IMR-90 (cell line): ENCODE measurements at regions of chrX and their contacts with region 1.

Region 1: GRCh38 chrX:16826207-16826606 is 39.9 kb downstream of the TXLNG start:
- DNase-seq: peak; percentile 74
- ATAC-seq: peak; percentile 69; the same call in 1 of the 2 replicates
- H3K4me3 ChIP-seq: no peak overlapping the region
- H3K27ac ChIP-seq: no peak overlapping the region
- H3K4me1 ChIP-seq: peaks cover 11% of the 10 kb centered on the region
- H3K27me3 ChIP-seq: no peaks in the 10 kb centered on the region; the same call in 1 of the 2 replicates
- CTCF ChIP-seq: peak; percentile 76
- POLR2A ChIP-seq: no peak
- RAD21 ChIP-seq: peak; percentile 80

Region 2: DNA sequence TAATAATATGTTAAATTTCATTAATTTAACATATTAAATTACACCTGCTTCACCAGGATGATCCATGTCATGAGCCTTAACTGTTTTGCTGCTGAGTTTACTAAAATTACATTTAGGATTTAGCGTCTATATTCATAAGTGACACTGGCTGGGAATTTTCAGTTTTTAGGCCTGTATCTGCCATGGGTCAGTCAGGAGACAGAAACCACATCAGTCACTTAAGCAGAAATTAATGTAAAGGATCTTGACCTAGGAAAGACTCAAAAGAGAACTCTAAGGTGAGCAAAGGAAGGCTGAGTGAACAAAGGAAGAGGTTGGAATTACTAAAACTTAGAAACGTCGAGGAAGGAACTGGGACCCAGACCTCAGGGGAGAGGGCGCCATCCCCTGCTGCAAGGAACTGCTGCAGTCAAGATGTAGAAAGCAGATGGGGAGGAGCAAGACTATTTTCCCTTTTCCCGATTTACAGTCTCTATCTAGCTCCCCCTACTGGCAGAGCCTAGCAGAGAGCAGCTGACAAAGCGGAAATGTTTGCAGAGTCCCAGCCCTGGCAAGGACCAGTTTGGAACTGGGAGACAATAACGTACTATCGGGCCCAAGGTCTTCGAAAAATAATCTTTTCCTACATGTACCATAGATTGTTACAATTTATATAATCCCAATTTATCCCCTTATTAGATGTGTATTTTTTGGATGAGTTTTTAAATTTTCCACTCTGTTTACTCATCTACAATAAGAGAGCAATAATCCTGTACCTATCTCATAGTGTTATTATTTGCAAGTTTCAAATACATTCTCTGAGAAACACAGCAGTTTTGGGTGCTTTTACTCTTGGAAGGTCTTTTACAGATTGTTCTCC is 66.5 kb after region 1 on chrX:
- CTCF ChIA-PET with region 1: interaction called, 11 read pairs
- POLR2A ChIA-PET with region 1: no interaction called
- dilution Hi-C with region 1: no loop called
- in situ Hi-C with region 1: no loop called
- intact Hi-C with region 1: loop called (anchors 1 kb)
- DNase-seq: peak; percentile 82
- ATAC-seq: peak; percentile 100
- H3K4me3 ChIP-seq: no peak overlapping the region
- H3K27ac ChIP-seq: no peak overlapping the region
- H3K4me1 ChIP-seq: no peaks in the 10 kb centered on the region
- H3K27me3 ChIP-seq: peaks cover 22% of the 10 kb centered on the region
- CTCF ChIP-seq: peak; percentile 82
- POLR2A ChIP-seq: no peak
- RAD21 ChIP-seq: peak; percentile 57

Region 3: GRCh38 chrX:17053502-17053901 is 227.3 kb after region 1 on chrX:
- CTCF ChIA-PET with region 1: no interaction called
- POLR2A ChIA-PET with region 1: no interaction called
- dilution Hi-C with region 1: no loop called
- in situ Hi-C with region 1: loop called (anchors 10 kb)
- intact Hi-C with region 1: no loop called
- DNase-seq: no peak
- ATAC-seq: no peak
- H3K4me3 ChIP-seq: no peak overlapping the region
- H3K27ac ChIP-seq: no peak overlapping the region
- H3K4me1 ChIP-seq: no peaks in the 10 kb centered on the region
- H3K27me3 ChIP-seq: peaks cover 9% of the 10 kb centered on the region
- CTCF ChIP-seq: no peak
- POLR2A ChIP-seq: no peak
- RAD21 ChIP-seq: no peak

Region 4: GRCh38 chrX:17590892-17591740 is 764.9 kb after region 1 on chrX:
- CTCF ChIA-PET with region 1: no interaction called
- POLR2A ChIA-PET with region 1: no interaction called
- dilution Hi-C with region 1: no loop called
- in situ Hi-C with region 1: no loop called
- intact Hi-C with region 1: loop called (anchors 5 kb)
- DNase-seq: peak; percentile 80
- ATAC-seq: peak; percentile 87
- H3K4me3 ChIP-seq: no peak overlapping the region
- H3K27ac ChIP-seq: peak overlapping the region; percentile 33; the same call in 1 of the 2 replicates
- H3K4me1 ChIP-seq: peaks cover 5% of the 10 kb centered on the region
- H3K27me3 ChIP-seq: no peaks in the 10 kb centered on the region
- CTCF ChIP-seq: peak; percentile 80
- POLR2A ChIP-seq: no peak
- RAD21 ChIP-seq: peak; percentile 83